Calu3 (cell line): ENCODE measurements at regions of chr11 and their contacts with region 1.

Region 1: DNA sequence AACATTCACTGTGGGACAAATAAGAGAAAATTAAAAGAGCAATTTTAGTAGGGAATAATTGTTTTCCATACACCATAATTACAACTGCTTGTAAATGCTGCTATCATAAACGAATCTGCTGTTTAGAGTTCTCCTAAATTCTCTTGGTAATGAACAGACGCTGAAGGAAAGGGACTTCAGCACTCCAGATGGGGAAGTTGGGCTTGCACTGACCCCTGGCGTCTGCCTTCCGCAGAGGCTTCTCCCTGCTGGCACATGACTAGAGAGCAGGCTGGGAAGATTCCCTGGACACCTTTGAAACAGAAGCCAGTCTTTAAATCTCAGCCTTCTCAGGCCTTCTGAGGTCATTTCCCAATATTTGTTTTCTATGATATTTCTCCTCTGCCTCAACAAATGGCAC is 84.1 kb downstream of the NXPE2 start:
- DNase-seq: peak; percentile 44
- H3K4me3 Mint-ChIP-seq: no peak overlapping the region
- H3K27ac Mint-ChIP-seq: no peak overlapping the region
- H3K4me1 Mint-ChIP-seq: no peaks in the 10 kb centered on the region
- H3K27me3 Mint-ChIP-seq: peaks cover 11% of the 10 kb centered on the region
- CTCF ChIP-seq: no peak

Region 2: DNA sequence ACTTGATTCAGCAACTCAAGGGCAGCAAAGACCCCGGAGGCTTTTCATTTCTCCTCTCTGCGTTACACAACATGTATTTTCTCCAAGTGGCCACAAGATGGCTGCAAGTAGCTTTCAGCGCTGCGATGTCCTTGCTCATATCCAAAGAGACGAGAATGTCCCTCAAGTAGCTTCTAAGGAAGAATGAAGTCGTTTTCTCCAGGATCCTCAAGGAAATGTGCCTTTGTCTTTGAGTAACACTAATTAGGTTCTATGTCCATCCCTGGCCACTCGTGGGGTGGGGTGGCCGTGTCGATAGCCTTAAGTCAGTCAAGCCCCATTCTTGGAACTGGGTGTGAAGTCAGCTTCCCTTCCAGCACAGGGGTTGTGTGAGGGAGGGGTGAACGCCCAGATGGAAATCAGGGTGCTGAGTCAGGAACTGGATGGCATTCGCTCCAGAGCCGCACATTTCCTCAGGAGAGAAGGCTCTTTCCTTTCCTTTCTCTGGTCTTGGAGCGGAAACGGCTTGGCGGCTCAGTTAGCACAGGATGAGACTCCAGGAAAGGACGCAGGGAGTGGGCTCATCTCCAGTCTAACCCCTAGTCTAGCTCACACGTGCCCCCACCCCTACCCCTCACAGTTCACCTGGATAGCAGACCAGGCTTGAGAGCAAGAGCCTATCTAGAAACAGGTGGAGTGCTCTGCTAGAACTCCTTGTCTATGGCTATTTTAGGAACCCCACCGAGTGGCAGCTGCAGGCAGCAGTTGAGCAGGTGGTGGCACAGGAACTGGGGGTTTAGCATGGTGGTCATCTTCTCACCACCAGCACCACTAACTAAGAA is 421.9 kb before region 1 on chr11:
- CTCF ChIA-PET with region 1: no interaction called
- intact Hi-C with region 1: loop called (anchors 1 kb)
- DNase-seq: no peak
- H3K4me3 Mint-ChIP-seq: no peak overlapping the region
- H3K27ac Mint-ChIP-seq: no peak overlapping the region
- H3K4me1 Mint-ChIP-seq: no peaks in the 10 kb centered on the region
- H3K27me3 Mint-ChIP-seq: no peaks in the 10 kb centered on the region
- CTCF ChIP-seq: peak; percentile 59

Region 3: DNA sequence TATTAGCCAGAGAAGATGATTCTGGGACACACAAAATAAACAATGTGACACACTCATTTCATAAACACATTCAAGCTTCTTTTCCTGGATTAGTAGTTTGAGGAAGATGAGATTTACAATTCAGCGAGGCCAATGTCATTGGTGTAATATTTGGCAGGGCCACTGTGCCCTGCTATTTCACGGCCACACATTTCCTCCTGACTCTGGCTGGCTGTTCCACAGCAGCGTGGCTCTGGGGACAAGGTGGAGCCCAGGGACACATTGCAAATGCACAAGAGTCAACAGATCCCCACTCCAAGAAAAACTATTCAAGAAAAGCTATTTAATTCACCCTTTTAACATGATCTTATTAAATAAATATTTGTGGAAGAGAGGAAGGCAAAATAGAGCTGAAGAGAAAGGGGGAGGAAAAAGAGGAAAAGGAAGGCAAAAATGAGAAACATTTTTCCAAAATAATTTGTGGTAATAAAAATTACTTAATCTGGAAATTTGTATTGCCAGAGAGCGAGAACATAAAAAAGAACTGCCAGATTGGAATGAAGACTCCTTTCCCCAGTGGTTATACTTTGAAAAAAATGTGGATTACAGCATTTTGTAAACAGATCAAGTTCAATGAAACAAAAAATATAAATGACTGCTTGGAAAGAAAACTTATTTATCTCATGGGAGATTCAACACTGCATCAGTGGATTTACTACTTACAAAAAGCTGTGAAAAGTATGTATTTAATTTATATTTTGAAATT is 57.0 kb before region 1 on chr11:
- CTCF ChIA-PET with region 1: no interaction called
- intact Hi-C with region 1: no loop called
- DNase-seq: no peak
- H3K4me3 Mint-ChIP-seq: no peak overlapping the region
- H3K27ac Mint-ChIP-seq: no peak overlapping the region
- H3K4me1 Mint-ChIP-seq: no peaks in the 10 kb centered on the region
- H3K27me3 Mint-ChIP-seq: no peaks in the 10 kb centered on the region
- CTCF ChIP-seq: no peak

Region 4: GRCh38 chr11:114942207-114942606 is 179.8 kb after region 1 on chr11:
- CTCF ChIA-PET with region 1: no interaction called
- intact Hi-C with region 1: no loop called
- DNase-seq: no peak
- H3K4me3 Mint-ChIP-seq: no peak overlapping the region
- H3K27ac Mint-ChIP-seq: no peak overlapping the region
- H3K4me1 Mint-ChIP-seq: no peaks in the 10 kb centered on the region
- H3K27me3 Mint-ChIP-seq: no peaks in the 10 kb centered on the region
- CTCF ChIP-seq: no peak